ENCODE measurements at regions of chr2 and their contacts with region 1.

Region 1: GRCh38 chr2:170361090-170361936 is 183.4 kb downstream of the MYO3B start:
- DNase-seq: peak; percentile 10 to 58 (median 46)
- ATAC-seq: peak; percentile 84
- H3K4me3 ChIP-seq: no peak overlapping the region
- H3K4me3 Mint-ChIP-seq: peak overlapping the region in 3 of 10 donors; percentile 0 to 56 (median 4)
- H3K27ac ChIP-seq: no peak overlapping the region
- H3K27ac Mint-ChIP-seq: peak overlapping the region in 2 of 9 donors; percentile 9 to 75
- H3K4me1 ChIP-seq: peaks cover 0 to 6% of the 10 kb centered on the region in 2 donors
- H3K4me1 Mint-ChIP-seq: peaks cover 3 to 48% (median 8%) of the 10 kb centered on the region in 7 donors
- H3K27me3 ChIP-seq: no peaks in the 10 kb centered on the region
- H3K27me3 Mint-ChIP-seq: peaks cover 0 to 23% (median 11%) of the 10 kb centered on the region in 5 donors

Region 2: GRCh38 chr2:170324640-170325046 is 36.7 kb before region 1 on chr2:
- CTCF ChIA-PET with region 1: interaction called, 4 read pairs
- POLR2A ChIA-PET with region 1: no interaction called
- intact Hi-C with region 1: loop called (anchors 1 kb)
- DNase-seq: peak in 8 of 9 donors; percentile 5 to 57 (median 34)
- ATAC-seq: peak; percentile 31
- H3K4me3 ChIP-seq: no peak overlapping the region
- H3K4me3 Mint-ChIP-seq: no peak overlapping the region
- H3K27ac ChIP-seq: no peak overlapping the region
- H3K27ac Mint-ChIP-seq: no peak overlapping the region
- H3K4me1 ChIP-seq: no peaks in the 10 kb centered on the region
- H3K4me1 Mint-ChIP-seq: peaks cover 0 to 2% (median 0%) of the 10 kb centered on the region in 7 donors
- H3K27me3 ChIP-seq: no peaks in the 10 kb centered on the region
- H3K27me3 Mint-ChIP-seq: peaks cover 0 to 7% (median 3%) of the 10 kb centered on the region in 5 donors

Region 3: GRCh38 chr2:170371231-170371998 is 10.1 kb after region 1 on chr2:
- CTCF ChIA-PET with region 1: interaction called, 9 read pairs
- POLR2A ChIA-PET with region 1: no interaction called
- intact Hi-C with region 1: loop called in 1 of 2 experiments (anchors 1 kb)
- DNase-seq: peak in 4 of 9 donors; percentile 5 to 35 (median 32)
- ATAC-seq: no peak
- H3K4me3 ChIP-seq: no peak overlapping the region
- H3K4me3 Mint-ChIP-seq: peak overlapping the region in 9 of 10 donors; percentile 39 to 79 (median 60)
- H3K27ac ChIP-seq: no peak overlapping the region
- H3K27ac Mint-ChIP-seq: peak overlapping the region in 1 of 9 donors; percentile 67
- H3K4me1 ChIP-seq: peaks cover 0 to 6% of the 10 kb centered on the region in 2 donors
- H3K4me1 Mint-ChIP-seq: peaks cover 2 to 49% (median 26%) of the 10 kb centered on the region in 7 donors
- H3K27me3 ChIP-seq: no peaks in the 10 kb centered on the region
- H3K27me3 Mint-ChIP-seq: peaks cover 21 to 75% (median 57%) of the 10 kb centered on the region in 5 donors

Region 4: GRCh38 chr2:170396799-170397459 is 35.6 kb after region 1 on chr2:
- CTCF ChIA-PET with region 1: no interaction called
- POLR2A ChIA-PET with region 1: no interaction called
- intact Hi-C with region 1: loop called in 1 of 2 experiments (anchors 2 kb)
- DNase-seq: peak in 2 of 9 donors; percentile 10 to 15
- ATAC-seq: no peak
- H3K4me3 ChIP-seq: no peak overlapping the region
- H3K4me3 Mint-ChIP-seq: no peak overlapping the region
- H3K27ac ChIP-seq: no peak overlapping the region
- H3K27ac Mint-ChIP-seq: no peak overlapping the region
- H3K4me1 ChIP-seq: no peaks in the 10 kb centered on the region
- H3K4me1 Mint-ChIP-seq: peaks cover 0 to 8% (median 0%) of the 10 kb centered on the region in 7 donors
- H3K27me3 ChIP-seq: no peaks in the 10 kb centered on the region
- H3K27me3 Mint-ChIP-seq: peaks cover 33 to 64% (median 43%) of the 10 kb centered on the region in 5 donors

Region 5: GRCh38 chr2:170409164-170409535 is 47.8 kb after region 1 on chr2:
- CTCF ChIA-PET with region 1: interaction called, 5 read pairs
- POLR2A ChIA-PET with region 1: no interaction called
- intact Hi-C with region 1: loop called in 1 of 2 experiments (anchors 5 kb)
- DNase-seq: peak; percentile 46 to 80 (median 69)
- ATAC-seq: peak; percentile 86
- H3K4me3 ChIP-seq: no peak overlapping the region
- H3K4me3 Mint-ChIP-seq: peak overlapping the region in 8 of 10 donors; percentile 61 to 80 (median 64)
- H3K27ac ChIP-seq: no peak overlapping the region
- H3K27ac Mint-ChIP-seq: peak overlapping the region in 2 of 9 donors; percentile 43 to 44
- H3K4me1 ChIP-seq: peaks cover 0 to 6% of the 10 kb centered on the region in 2 donors
- H3K4me1 Mint-ChIP-seq: peaks cover 5 to 15% (median 11%) of the 10 kb centered on the region in 7 donors
- H3K27me3 ChIP-seq: no peaks in the 10 kb centered on the region
- H3K27me3 Mint-ChIP-seq: peaks cover 24 to 32% (median 32%) of the 10 kb centered on the region in 5 donors

Measured in naive thymus-derived CD4-positive, alpha-beta T cell (primary cell).